Common myeloid progenitor, CD34-positive (primary cell): ENCODE measurements at regions of chr1 and their contacts with region 1.

Region 1: GRCh38 chr1:9110669-9111356 is 18.1 kb downstream of the GPR157 start:
- DNase-seq: peak; percentile 89 to 94 (median 91)
- H3K4me3 ChIP-seq: no peak overlapping the region
- H3K27ac ChIP-seq: no peak overlapping the region
- H3K4me1 ChIP-seq: peaks cover 0 to 5% (median 0%) of the 10 kb centered on the region in 4 experiments
- H3K27me3 ChIP-seq: no peaks in the 10 kb centered on the region

Region 2: GRCh38 chr1:9004700-9005394 is 106.0 kb before region 1 on chr1:
- CTCF ChIA-PET with region 1: interaction called, 190 read pairs
- POLR2A ChIA-PET with region 1: no interaction called
- DNase-seq: peak; percentile 79 to 88 (median 83)
- H3K4me3 ChIP-seq: peak overlapping the region in 1 of 7 experiments; percentile 1
- H3K27ac ChIP-seq: no peak overlapping the region
- H3K4me1 ChIP-seq: peaks cover 0 to 17% (median 11%) of the 10 kb centered on the region in 4 experiments
- H3K27me3 ChIP-seq: no peaks in the 10 kb centered on the region

Region 3: GRCh38 chr1:9121496-9122409 is 10.9 kb after region 1 on chr1:
- CTCF ChIA-PET with region 1: interaction called, 16 read pairs
- POLR2A ChIA-PET with region 1: no interaction called
- DNase-seq: peak in 1 of 3 donors; percentile 7
- H3K4me3 ChIP-seq: no peak overlapping the region
- H3K27ac ChIP-seq: no peak overlapping the region
- H3K4me1 ChIP-seq: no peaks in the 10 kb centered on the region
- H3K27me3 ChIP-seq: no peaks in the 10 kb centered on the region

Region 4: DNA sequence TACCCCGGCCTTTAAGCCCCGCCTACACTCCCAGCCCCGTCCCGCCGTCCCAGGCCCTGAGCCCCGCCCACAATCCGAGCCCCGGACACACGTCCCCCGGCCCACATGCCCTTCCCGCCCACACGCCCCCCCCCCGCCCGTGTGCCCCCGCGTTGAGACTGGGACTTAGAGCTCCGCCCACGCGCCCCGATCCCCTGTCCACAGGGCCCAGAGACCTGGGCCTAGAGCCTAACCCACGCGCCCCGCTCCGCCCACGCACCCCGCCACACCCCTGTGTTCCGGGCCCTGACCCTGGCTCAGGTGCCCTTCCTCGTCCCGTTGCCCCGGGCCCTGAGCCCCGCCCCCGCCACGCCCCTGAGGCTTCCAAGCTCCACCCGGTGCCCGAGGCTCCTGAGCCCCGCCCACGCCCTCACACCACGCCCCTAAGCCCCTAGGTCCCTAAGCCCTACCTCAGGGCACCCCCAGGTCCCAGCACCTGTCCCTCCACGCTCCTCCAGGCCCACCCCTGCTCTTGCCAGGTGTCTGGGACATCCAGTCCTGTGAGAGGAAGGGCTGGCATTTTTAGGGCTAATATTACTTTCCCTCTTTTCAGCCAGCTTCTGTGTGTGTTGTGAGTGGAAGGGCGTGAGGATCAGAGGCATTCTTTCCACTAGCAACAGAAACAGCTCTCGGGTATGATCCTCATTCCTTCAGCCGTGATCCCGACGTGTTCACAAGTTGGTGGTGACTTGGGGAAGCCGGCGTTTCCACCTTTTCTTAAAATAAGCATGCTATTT is 18.6 kb after region 1 on chr1:
- CTCF ChIA-PET with region 1: interaction called, 13 read pairs
- POLR2A ChIA-PET with region 1: interaction called, 6 read pairs
- DNase-seq: peak; percentile 86 to 92 (median 90)
- H3K4me3 ChIP-seq: peak overlapping the region in 6 of 7 experiments; percentile 35 to 84 (median 53)
- H3K27ac ChIP-seq: no peak overlapping the region
- H3K4me1 ChIP-seq: peaks cover 0 to 18% (median 14%) of the 10 kb centered on the region in 4 experiments
- H3K27me3 ChIP-seq: peaks cover 0 to 11% (median 0%) of the 10 kb centered on the region in 5 experiments

Region 5: DNA sequence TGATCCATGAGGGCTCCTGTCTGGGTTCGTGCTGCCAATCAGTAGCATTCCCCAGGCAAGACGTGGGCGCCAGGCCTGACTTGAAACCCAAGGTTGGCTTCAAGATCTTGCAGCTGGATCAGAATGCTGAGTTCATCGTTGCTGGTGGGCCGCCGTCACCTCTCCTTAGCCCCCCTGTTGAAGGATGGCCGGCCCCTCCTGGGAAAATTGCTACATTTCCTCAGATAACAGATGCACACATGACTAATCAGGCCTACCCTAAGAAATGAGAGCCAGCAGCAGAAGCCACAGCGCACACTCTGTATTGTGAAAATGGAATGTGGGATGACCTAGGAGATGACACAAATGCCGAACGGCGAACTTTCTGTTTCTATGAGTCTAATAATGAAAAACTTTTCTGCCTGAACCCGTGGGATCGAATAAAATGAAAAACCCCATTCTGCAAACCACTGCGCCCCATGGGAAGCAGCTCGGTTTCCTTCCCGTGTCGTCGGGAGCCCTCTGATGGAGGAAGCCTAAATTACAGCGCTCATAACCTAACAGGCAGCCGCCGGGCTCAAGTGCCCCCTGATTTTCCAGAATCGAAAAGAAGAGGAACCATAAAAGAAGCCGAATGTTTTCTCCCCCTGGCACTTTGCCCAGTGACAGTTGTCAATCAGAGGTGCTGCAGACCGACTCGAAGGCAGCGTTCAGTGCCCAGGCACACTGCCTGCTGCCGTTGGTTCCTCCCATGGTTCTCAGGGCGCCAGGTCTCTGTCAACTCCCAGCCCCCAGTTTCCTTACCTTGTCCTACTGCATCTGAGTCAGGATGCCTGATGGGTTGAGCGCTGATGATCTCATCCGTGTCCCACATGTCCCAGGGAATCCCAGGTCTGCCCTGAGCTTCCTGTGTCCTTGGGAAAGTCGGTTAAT is 85.6 kb after region 1 on chr1:
- CTCF ChIA-PET with region 1: interaction called, 17 read pairs
- POLR2A ChIA-PET with region 1: no interaction called
- DNase-seq: peak; percentile 66 to 81 (median 73)
- H3K4me3 ChIP-seq: peak overlapping the region in 3 of 7 experiments; percentile 13 to 33 (median 19)
- H3K27ac ChIP-seq: no peak overlapping the region
- H3K4me1 ChIP-seq: peaks cover 0 to 27% (median 16%) of the 10 kb centered on the region in 4 experiments
- H3K27me3 ChIP-seq: peaks cover 0 to 49% (median 34%) of the 10 kb centered on the region in 5 experiments